CD8-positive, alpha-beta memory T cell (primary cell): ENCODE measurements at regions of chr2 and their contacts with region 1.

Region 1: DNA sequence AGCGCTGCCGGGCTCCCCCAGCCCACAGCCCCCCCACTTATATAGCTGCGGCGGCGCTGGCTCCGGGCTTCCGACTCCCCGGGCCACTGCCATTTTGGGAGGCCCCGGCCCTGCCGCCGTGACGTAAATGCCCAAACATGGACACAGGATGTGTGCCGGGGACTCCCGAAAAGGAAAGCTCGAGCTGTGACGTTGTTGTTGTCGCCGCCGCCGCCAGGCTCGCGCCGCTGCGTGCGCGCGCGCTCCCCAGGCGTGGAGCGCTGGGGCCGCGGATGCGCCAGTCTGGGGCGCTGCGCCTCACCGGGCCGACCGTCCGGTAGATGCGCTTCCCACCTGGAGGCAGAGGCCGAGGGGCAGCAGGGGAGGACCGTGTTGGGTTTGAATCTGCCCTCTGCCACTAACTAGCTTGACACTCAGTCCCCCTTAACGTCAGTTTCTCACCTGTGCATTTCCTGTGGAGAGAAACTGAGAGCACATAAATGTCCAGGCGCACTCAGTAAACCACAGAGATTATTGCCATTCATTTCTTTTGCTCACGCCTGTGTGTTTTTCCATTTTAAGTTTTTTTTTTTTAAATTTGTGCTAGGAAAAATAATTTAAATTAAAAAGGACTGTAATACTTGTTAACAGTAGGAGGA is at the start of gene EGR4:
- DNase-seq: peak; percentile 85 to 95 (median 88)
- H3K4me3 ChIP-seq: peak within 1 kb of the TSS; percentile 21
- H3K4me3 Mint-ChIP-seq: peak within 1 kb of the TSS; percentile 65 to 90 (median 79)
- H3K27ac ChIP-seq: no peak within 1 kb of the TSS
- H3K27ac Mint-ChIP-seq: peak within 1 kb of the TSS in 4 of 8 donors; percentile 12 to 58 (median 27)
- H3K4me1 ChIP-seq: peaks cover 27% of the 10 kb centered on the region
- H3K4me1 Mint-ChIP-seq: peaks cover 8 to 34% (median 20%) of the 10 kb centered on the region in 3 donors
- H3K27me3 ChIP-seq: peaks cover 50% of the 10 kb centered on the region
- H3K27me3 Mint-ChIP-seq: peaks cover 46 to 67% of the 10 kb centered on the region in 2 donors
- total RNA-seq, gene EGR4: 0.31 to 0.55 TPM

Region 2: DNA sequence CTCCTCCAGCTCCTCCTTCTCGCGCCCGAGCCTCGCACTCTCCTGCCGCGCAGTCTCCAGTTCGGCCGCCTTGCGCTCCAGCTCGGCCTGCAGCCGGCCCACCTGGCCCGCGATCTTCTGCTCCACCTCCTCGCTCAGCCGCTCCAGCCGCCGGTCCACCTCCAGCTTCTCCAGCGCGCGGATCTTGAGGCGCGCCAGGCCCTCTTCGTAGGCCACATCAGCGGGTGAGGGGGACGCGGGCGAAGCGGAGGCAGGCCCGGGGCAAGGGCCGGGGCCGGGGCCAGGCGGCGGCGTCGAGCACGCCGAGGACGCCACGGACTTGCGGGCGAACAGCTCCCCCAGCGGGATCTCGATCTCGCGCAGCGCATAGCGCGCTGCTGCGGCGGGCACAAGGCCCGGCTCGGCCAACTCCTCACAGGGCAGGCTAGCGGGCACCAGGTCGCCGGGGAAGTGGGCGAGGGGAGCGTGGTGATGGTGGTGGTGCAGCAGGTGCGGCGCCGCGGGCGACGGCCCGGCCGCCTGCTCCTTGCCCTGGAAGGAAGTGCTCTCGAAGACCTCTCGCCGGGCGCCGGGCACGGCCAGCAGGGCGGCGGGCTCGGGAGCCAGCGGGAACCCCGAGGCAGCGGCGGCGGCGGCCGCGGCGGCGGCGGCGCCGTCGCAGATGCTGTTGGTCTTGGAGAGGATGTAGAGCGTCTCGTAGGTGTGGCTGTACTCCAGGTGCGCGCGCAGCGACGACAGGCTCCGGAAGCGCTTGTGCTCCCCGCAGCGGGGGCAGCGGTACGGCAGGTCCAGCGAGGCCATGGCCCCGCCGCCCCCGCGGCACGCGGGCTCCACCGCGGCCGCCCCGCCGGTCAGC is 24.6 kb before region 1 on chr2:
- CTCF ChIA-PET with region 1: interaction called, 21 read pairs
- POLR2A ChIA-PET with region 1: interaction called, 5 read pairs
- DNase-seq: peak; percentile 69 to 90 (median 71)
- H3K4me3 ChIP-seq: no peak overlapping the region
- H3K4me3 Mint-ChIP-seq: peak overlapping the region; percentile 44 to 81 (median 60)
- H3K27ac ChIP-seq: no peak overlapping the region
- H3K27ac Mint-ChIP-seq: peak overlapping the region in 1 of 8 donors; percentile 12
- H3K4me1 ChIP-seq: peaks cover 11% of the 10 kb centered on the region
- H3K4me1 Mint-ChIP-seq: peaks cover 21 to 34% (median 25%) of the 10 kb centered on the region in 3 donors
- H3K27me3 ChIP-seq: no peaks in the 10 kb centered on the region
- H3K27me3 Mint-ChIP-seq: no peaks in the 10 kb centered on the region

Region 3: GRCh38 chr2:73279852-73280251 is 13.8 kb before region 1 on chr2:
- CTCF ChIA-PET with region 1: interaction called, 39 read pairs
- POLR2A ChIA-PET with region 1: interaction called, 3 read pairs
- DNase-seq: no peak
- H3K4me3 ChIP-seq: no peak overlapping the region
- H3K4me3 Mint-ChIP-seq: peak overlapping the region in 1 of 7 donors; percentile 59
- H3K27ac ChIP-seq: no peak overlapping the region
- H3K27ac Mint-ChIP-seq: no peak overlapping the region
- H3K4me1 ChIP-seq: peaks cover 13% of the 10 kb centered on the region
- H3K4me1 Mint-ChIP-seq: peaks cover 8 to 19% (median 19%) of the 10 kb centered on the region in 3 donors
- H3K27me3 ChIP-seq: no peaks in the 10 kb centered on the region
- H3K27me3 Mint-ChIP-seq: no peaks in the 10 kb centered on the region

Region 4: GRCh38 chr2:73374269-73374668 is 80.6 kb after region 1 on chr2:
- CTCF ChIA-PET with region 1: no interaction called
- POLR2A ChIA-PET with region 1: no interaction called
- DNase-seq: no peak
- H3K4me3 ChIP-seq: no peak overlapping the region
- H3K4me3 Mint-ChIP-seq: no peak overlapping the region
- H3K27ac ChIP-seq: no peak overlapping the region
- H3K27ac Mint-ChIP-seq: peak overlapping the region in 1 of 8 donors; percentile 31
- H3K4me1 ChIP-seq: no peaks in the 10 kb centered on the region
- H3K4me1 Mint-ChIP-seq: no peaks in the 10 kb centered on the region
- H3K27me3 ChIP-seq: no peaks in the 10 kb centered on the region
- H3K27me3 Mint-ChIP-seq: peaks cover 30 to 38% of the 10 kb centered on the region in 2 donors